AG04450 (cell line): ENCODE measurements at regions of chr21 and their contacts with region 1.

Region 1: DNA sequence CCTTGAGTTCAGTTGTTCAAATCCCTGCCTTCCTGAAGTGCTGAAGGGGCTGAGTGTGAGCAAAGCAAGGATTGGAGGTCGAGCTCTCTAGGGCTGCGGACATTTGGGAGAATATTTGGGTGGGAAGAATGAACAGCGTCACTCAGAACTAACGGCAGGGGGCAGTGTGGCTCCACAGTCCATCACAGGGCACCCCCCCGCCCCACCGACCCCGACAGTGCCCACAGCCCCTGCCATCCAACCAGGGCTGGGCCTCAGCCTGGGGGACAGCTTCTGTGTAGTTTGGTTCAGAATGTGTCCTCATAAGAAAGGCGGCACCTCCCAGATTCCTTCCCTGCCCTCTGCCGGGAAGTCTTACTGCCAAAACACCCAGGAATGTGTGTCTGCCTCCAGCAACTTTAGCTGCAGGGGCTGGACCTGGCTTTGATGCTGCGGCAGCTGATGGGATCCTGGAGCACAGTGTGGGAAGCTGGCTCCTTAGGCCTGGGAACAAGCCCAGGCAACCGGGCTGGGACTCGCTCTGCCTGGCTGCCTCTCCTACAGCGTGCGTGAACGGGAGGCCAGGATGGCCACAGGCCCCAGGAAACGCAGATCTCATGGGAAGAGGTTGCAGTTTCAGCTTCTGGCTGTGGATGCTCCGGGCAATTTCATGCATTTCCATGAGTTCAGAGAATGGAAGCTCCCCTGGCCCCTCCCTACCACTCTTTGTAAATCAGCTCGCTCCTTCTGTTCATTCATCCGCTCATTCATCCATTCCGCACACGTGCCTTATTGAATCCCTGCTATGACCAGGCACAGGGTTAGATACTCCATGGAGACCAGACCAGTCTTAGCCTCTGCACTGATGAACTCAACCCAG is 104.9 kb upstream of the TMPRSS2 start:
- DNase-seq: peak; percentile 74
- H3K4me3 ChIP-seq: no peak overlapping the region
- H3K27ac ChIP-seq: peak overlapping the region; percentile 68
- H3K27me3 ChIP-seq: peaks cover 12% of the 10 kb centered on the region
- CTCF ChIP-seq: peak; percentile 77

Region 2: GRCh38 chr21:41387042-41387750 is 225.7 kb before region 1 on chr21:
- CTCF ChIA-PET with region 1: no interaction called
- POLR2A ChIA-PET with region 1: no interaction called
- DNase-seq: no peak
- H3K4me3 ChIP-seq: no peak overlapping the region
- H3K27ac ChIP-seq: no peak overlapping the region
- H3K27me3 ChIP-seq: no peaks in the 10 kb centered on the region
- CTCF ChIP-seq: no peak

Region 3: GRCh38 chr21:41601573-41602368 is 11.1 kb before region 1 on chr21:
- CTCF ChIA-PET with region 1: interaction called, 26 read pairs
- POLR2A ChIA-PET with region 1: no interaction called
- DNase-seq: no peak
- H3K4me3 ChIP-seq: no peak overlapping the region
- H3K27ac ChIP-seq: no peak overlapping the region
- H3K27me3 ChIP-seq: peaks cover 12% of the 10 kb centered on the region
- CTCF ChIP-seq: no peak

Region 4: GRCh38 chr21:41768437-41769061 is 155.6 kb after region 1 on chr21:
- CTCF ChIA-PET with region 1: interaction called, 76 read pairs
- POLR2A ChIA-PET with region 1: interaction called, 4 read pairs
- DNase-seq: peak; percentile 27
- H3K4me3 ChIP-seq: peak overlapping the region; percentile 28
- H3K27ac ChIP-seq: no peak overlapping the region
- H3K27me3 ChIP-seq: peaks cover 94% of the 10 kb centered on the region
- CTCF ChIP-seq: peak; percentile 54

Region 5: DNA sequence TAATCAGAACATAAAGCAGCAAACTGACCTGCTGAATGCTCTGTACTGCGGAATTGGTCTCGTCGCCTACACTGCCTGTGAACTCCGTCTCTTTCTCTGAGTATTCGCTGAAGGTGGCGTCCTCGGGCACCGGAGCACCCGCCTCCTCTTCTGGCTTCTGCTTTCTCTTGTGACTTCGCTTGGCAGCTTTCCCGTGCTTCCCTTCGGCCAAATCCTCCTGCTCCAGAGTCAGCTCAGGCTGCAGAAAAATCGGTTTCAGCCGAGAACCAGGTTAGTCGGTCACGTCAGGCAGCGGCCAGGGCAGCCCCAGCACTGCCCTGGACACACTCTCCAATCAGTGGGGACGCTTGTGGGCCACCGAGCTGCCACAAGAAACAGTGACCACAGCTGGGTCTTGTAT is 189.8 kb after region 1 on chr21:
- CTCF ChIA-PET with region 1: interaction called, 15 read pairs
- POLR2A ChIA-PET with region 1: no interaction called
- DNase-seq: no peak
- H3K4me3 ChIP-seq: no peak overlapping the region
- H3K27ac ChIP-seq: no peak overlapping the region
- H3K27me3 ChIP-seq: no peaks in the 10 kb centered on the region
- CTCF ChIP-seq: no peak

Region 6: GRCh38 chr21:41832596-41833496 is 219.9 kb after region 1 on chr21:
- CTCF ChIA-PET with region 1: no interaction called
- POLR2A ChIA-PET with region 1: no interaction called
- DNase-seq: no peak
- H3K4me3 ChIP-seq: no peak overlapping the region
- H3K27ac ChIP-seq: no peak overlapping the region
- H3K27me3 ChIP-seq: no peaks in the 10 kb centered on the region
- CTCF ChIP-seq: no peak